Motor neuron (in vitro differentiated cells): ENCODE measurements at regions of chr2 and their contacts with region 1.

Region 1: GRCh38 chr2:24075915-24076848 is at the start of gene SF3B6:
- ATAC-seq: peak; percentile 87 to 95 (median 95)
- H3K4me3 ChIP-seq: peak within 1 kb of the TSS; percentile 57 to 86 (median 77)
- H3K27ac ChIP-seq: peak within 1 kb of the TSS; percentile 78 to 88
- H3K4me1 ChIP-seq: peaks cover 12 to 15% of the 10 kb centered on the region in 2 donors
- total RNA-seq, gene SF3B6: 145 to 231 (median 189) TPM

Region 2: DNA sequence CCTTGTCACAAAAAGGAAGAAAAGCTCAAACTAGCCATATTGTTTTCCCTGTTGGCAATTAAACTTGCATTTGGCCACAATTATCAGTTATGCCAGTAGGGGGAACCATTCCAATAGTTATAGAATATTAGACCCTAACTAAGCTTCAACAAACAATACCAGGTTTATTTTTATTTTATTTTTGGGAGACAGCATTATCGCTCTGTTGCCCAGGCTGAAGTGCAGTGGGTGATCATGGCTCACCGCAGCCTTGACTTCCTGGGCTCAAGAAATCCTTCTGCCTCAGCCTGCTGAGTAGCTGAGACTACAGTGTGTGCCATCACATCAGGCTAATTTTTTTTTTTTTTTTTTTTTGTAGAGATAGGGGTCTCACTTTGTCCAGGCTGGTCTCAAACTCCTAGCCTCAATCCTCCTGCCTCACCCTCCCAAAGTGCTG is 251.4 kb before region 1 on chr2:
- in situ Hi-C with region 1: loop called in 1 of 9 experiments (anchors 10 kb)
- ATAC-seq: peak in 6 of 8 experiments; percentile 32 to 77 (median 46)
- H3K4me3 ChIP-seq: no peak overlapping the region
- H3K27ac ChIP-seq: no peak overlapping the region
- H3K4me1 ChIP-seq: no peaks in the 10 kb centered on the region

Region 3: GRCh38 chr2:23993736-23994269 is 82.4 kb before region 1 on chr2:
- in situ Hi-C with region 1: no loop called
- ATAC-seq: no peak
- H3K4me3 ChIP-seq: no peak overlapping the region
- H3K27ac ChIP-seq: no peak overlapping the region
- H3K4me1 ChIP-seq: no peaks in the 10 kb centered on the region